GM10248 (cell line): ENCODE measurements at regions of chr3 and their contacts with region 1.

Region 1: DNA sequence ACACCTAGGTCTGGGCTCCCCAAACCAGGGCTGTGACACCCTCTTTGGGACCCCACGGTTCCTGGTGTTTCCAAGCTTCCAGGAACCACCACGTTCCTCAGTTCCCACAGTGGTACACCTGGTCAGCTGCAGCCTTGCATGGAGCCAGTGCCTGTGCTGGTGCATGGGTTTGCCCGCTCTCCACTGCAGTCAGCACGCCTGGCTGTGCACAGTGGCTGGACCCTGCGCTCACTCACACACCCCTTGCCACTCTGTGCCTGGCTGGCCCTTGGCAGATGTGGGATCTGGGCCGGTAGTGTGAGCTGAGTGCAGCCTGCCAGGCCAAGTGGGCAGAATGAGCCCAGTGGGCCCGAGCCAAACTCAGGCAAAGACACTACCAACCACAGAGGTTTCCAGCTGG is 48.8 kb downstream of the TCAIM start:
- DNase-seq: no peak
- CTCF ChIP-seq: no peak

Region 2: DNA sequence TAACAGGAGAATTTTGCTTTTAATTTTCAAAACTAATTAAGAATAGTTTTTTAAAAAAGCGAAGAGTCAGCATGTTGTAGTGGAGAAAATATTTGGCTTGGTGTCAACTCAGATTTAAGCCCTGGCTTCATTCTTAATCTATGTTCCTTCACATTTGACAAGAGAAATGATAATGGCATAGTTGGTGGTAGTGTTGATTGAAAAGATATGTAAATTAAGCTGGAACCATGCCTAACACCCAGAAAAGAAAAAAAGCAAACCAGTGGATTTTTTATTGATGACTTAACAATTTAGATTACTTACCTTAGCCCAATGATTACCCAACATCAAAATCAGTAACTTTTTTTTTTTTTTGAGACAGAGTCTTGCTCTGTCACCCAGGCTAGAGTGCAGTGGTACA is 21.5 kb before region 1 on chr3:
- CTCF ChIA-PET with region 1: interaction called, 10 read pairs
- POLR2A ChIA-PET with region 1: no interaction called
- DNase-seq: no peak
- CTCF ChIP-seq: no peak

Region 3: DNA sequence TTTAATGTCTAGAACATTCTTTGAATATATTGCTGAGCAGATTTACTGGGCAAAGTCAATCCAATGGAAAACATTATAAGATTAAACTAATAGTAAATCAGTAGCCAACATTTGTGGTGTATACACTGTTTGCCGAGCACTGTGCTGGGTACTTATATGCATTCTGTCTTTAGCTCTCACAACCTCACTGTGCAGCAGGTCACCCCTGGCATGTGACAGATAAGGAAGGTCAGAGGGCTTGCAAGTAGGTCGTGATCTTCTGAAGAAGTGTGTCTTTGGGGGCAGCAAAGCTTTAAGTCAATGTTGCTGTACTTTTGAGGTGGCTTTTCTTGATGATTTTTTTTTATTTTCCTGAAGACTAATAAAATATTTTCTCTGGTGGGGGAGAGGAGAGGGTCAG is 13.4 kb after region 1 on chr3:
- CTCF ChIA-PET with region 1: no interaction called
- POLR2A ChIA-PET with region 1: no interaction called
- DNase-seq: no peak
- CTCF ChIP-seq: no peak